Activated naive CD8-positive, alpha-beta T cell treated with anti-CD3 and anti-CD28 coated beads, Interleukin-2, amount 10 ng/mL, durations not matched to agents 7 days and 5 days (primary cell): ENCODE measurements at regions of chr16 and their contacts with region 1.

Region 1: GRCh38 chr16:27203429-27204231 is at the start of gene KDM8:
- DNase-seq: peak; percentile 98
- ATAC-seq: peak; percentile 92
- H3K4me3 Mint-ChIP-seq: peak within 1 kb of the TSS; percentile 90
- H3K27ac Mint-ChIP-seq: peak within 1 kb of the TSS; percentile 100
- H3K4me1 Mint-ChIP-seq: peaks cover 37% of the 10 kb centered on the region
- H3K27me3 Mint-ChIP-seq: no peaks in the 10 kb centered on the region
- total RNA-seq, gene KDM8: 20.1 to 21.8 TPM

Region 2: DNA sequence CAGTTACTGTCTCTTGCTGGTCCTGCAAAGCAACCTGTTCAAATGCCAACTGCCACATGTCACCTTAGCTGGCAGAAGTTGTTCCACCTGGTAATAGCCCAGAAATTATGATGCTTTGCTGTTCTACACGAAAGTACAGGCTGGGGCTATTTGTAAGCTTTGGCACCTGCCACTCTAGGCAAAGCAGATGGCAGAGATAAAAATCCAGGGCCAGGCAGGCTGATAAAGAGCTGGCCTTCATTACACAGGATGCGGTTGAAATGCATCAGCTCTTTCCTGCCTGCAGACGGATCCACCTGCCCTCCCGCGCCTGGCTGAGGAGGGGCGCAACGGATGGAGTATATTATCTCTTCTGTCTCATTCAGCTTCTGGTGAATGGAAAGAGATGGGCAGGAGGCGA is 29.6 kb before region 1 on chr16:
- POLR2A ChIA-PET with region 1: interaction called, 21 read pairs
- DNase-seq: peak; percentile 63
- ATAC-seq: peak; percentile 70
- H3K4me3 Mint-ChIP-seq: peak overlapping the region; percentile 40
- H3K27ac Mint-ChIP-seq: peak overlapping the region; percentile 91
- H3K4me1 Mint-ChIP-seq: peaks cover 57% of the 10 kb centered on the region
- H3K27me3 Mint-ChIP-seq: no peaks in the 10 kb centered on the region

Region 3: DNA sequence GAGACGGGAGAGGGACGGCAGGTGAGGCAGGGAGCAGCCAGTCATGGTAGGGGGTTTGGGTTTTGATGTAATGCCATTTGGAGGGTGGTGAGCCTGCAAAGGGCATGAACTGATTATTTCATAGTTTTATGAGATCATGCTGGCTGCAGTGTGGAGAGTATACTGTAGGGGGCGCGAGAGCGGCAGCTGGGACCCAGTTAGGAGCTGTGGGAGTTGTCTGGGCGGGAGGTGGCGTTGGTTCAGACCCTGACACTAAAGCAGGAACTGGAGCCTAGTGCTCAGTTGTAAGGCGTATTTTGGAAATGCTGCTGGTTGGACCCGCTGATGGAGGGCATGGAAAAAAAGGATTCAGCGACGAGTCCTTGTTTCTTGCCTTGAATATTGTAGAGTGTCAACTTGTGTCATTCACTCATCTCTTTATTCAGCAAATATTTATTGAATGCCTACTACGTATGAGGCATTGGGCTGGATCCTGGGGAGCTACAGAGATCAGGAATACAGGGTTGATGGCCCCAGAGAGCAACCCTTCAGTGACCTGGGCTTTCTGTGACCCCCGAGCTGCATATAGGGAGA is 24.0 kb before region 1 on chr16:
- POLR2A ChIA-PET with region 1: interaction called, 21 read pairs
- DNase-seq: peak; percentile 90
- ATAC-seq: peak; percentile 95
- H3K4me3 Mint-ChIP-seq: no peak overlapping the region
- H3K27ac Mint-ChIP-seq: peak overlapping the region; percentile 50
- H3K4me1 Mint-ChIP-seq: peaks cover 31% of the 10 kb centered on the region
- H3K27me3 Mint-ChIP-seq: peaks cover 4% of the 10 kb centered on the region